Activated CD4-positive, alpha-beta T cell treated with anti-CD3 and anti-CD28 coated beads, Interleukin-2, amount 10 ng/mL, durations not matched to agents 24 days and 14 days (primary cell): ENCODE measurements at regions of chr6 and their contacts with region 1.

Region 1: DNA sequence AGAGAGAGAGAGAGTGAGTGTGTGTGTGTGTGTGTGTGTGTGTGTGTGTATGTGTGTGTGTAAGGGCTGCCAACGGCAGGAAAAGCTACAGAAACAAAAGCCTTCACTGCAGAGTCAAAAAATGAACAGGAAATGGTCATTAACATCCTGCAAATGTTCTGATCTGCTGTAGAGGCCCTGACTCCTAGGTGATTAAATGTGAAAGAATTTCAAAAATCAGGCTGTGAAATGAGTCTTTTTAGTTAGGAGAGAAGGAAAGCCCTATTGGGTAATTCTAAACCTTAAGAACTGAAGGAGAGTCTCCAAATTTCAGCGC is 166.5 kb upstream of the MYLIP start:
- DNase-seq: peak; percentile 77
- H3K4me3 Mint-ChIP-seq: peak overlapping the region; percentile 1
- H3K27ac Mint-ChIP-seq: peak overlapping the region; percentile 73
- H3K4me1 Mint-ChIP-seq: peaks cover 20% of the 10 kb centered on the region
- H3K27me3 Mint-ChIP-seq: no peaks in the 10 kb centered on the region

Region 2: DNA sequence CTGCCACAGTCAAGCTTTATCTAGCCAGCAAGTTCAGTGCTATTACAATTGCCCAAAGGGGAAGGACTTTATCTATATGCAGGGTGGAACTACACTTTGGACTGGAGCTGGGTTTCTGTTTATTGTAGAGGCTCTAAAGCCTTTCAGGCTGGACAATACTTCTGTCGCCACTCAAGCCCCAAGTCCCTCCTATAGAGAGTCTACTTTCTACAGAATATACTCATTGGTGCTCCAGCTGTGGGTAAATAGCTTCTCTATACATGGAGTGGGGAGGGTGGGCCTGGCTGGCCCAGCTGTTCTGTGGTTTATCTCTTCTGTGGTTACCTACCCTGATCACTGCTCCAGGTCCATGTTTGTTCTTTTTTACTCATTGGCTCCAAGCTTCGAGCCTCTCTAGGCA is 14.6 kb after region 1 on chr6:
- intact Hi-C with region 1: no loop called
- DNase-seq: no peak
- H3K4me3 Mint-ChIP-seq: no peak overlapping the region
- H3K27ac Mint-ChIP-seq: no peak overlapping the region
- H3K4me1 Mint-ChIP-seq: no peaks in the 10 kb centered on the region
- H3K27me3 Mint-ChIP-seq: peaks cover 2% of the 10 kb centered on the region

Region 3: DNA sequence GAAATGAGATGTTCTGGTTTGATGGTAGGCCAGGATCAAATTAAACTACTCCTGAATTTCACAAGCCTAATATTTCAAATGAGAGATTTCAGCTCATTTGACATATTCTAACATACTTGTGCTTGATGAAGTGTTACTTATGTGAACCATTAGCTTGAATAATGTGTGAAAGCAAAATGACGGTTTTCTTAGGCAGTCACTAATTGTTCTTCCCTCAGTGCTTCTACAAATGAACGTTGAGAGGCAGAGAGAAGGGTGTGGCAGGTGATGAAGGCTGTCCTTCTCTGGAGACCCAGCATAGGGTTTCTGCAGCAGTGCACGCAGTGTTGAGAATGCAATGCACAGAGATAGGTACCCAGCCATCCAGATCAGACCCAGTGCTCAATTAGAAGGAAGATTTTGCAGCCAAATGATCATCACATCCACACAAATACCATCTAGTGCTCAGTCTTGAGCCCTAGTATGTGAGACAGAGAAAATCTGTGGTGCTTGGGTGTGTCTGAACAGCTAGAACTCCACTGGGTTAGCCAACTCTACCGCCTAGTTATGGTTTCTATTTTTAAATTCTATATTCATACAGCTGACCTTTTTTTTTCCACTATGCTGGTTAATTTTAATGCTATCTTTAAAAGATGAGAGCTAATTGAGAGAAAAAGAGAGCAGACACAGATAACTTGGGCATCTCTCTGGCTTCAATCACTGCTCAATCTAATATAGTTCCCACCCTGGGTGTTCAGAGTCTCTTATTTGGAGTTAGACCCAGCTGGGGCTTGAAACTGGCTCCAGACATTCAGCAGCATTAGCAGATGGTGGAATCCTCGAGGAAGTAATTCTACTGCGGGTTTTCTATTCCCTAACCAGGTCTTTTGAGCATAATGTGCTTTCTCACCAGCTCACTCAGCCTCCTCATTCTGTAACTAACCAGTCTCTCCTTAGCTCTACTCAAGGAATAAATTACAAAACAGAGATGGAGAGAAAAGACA is 162.1 kb after region 1 on chr6:
- intact Hi-C with region 1: no loop called
- DNase-seq: no peak
- H3K4me3 Mint-ChIP-seq: no peak overlapping the region
- H3K27ac Mint-ChIP-seq: no peak overlapping the region
- H3K4me1 Mint-ChIP-seq: peaks cover 4% of the 10 kb centered on the region
- H3K27me3 Mint-ChIP-seq: peaks cover 41% of the 10 kb centered on the region

Region 4: GRCh38 chr6:16136621-16137450 is 174.4 kb after region 1 on chr6:
- intact Hi-C with region 1: loop called (anchors 2 kb)
- DNase-seq: peak; percentile 71
- H3K4me3 Mint-ChIP-seq: peak overlapping the region; percentile 71
- H3K27ac Mint-ChIP-seq: peak overlapping the region; percentile 93
- H3K4me1 Mint-ChIP-seq: peaks cover 60% of the 10 kb centered on the region
- H3K27me3 Mint-ChIP-seq: no peaks in the 10 kb centered on the region